ENCODE measurements at regions of chr12 and their contacts with region 1.

Region 1: GRCh38 chr12:85575120-85576096 is 260.8 kb downstream of the RASSF9 start:
- DNase-seq: peak; percentile 30
- ATAC-seq: peak; percentile 85

Region 2: GRCh38 chr12:85642810-85643209 is 67.4 kb after region 1 on chr12:
- intact Hi-C with region 1: no loop called
- DNase-seq: no peak
- ATAC-seq: no peak

Region 3: DNA sequence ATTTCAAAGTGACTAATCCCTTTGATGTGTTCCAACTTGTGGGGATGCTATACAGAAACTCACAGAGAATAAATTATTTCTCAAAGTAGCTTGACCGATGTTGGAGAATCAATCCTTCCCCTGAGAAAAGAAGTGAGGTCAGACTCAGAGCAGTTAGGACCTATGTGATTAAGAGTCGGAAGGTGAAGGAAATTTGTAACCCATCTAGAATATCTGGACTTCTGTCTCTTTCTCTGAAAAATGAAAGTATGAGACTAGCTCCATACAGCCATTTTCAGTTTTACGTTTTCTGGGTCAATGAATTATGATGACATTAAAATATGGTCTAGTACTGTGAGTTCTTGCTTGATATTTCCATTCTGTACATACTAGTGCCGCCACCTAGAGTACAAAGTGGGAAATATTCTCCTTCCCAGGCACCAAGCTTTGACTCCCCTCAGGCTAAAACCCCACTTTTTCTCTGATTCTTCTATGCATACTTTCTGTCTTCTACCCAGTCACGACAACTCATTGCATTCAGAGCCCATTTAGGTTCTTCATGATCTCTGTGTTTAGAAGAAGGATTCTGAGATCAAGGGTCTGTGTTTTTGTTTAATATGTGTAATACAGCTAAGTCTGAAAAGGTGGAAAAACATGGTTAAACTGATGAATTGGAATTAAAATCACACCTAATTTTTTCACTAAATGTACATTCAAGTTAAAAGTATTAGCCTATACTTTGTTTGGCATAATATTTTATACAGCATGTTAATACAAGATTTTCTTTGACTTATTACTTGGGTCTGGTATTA is 291.8 kb after region 1 on chr12:
- intact Hi-C with region 1: loop called (anchors 2 kb)
- DNase-seq: no peak
- ATAC-seq: peak; percentile 82

Measured in left ventricle myocardium superior (tissue), 1 donor.